WTC11 (cell line): ENCODE measurements at regions of chr6 and their contacts with region 1.

Region 1: GRCh38 chr6:34027445-34027936 is 118.4 kb downstream of the GRM4 start:
- DNase-seq: peak; percentile 85
- ATAC-seq: peak; percentile 85
- H3K4me3 Mint-ChIP-seq: no peak overlapping the region
- H3K27ac Mint-ChIP-seq: no peak overlapping the region
- H3K4me1 Mint-ChIP-seq: no peaks in the 10 kb centered on the region
- H3K27me3 Mint-ChIP-seq: no peaks in the 10 kb centered on the region
- CTCF ChIP-seq: peak; percentile 86

Region 2: GRCh38 chr6:33851959-33852358 is 175.5 kb before region 1 on chr6:
- CTCF ChIA-PET with region 1: interaction called, 32 read pairs
- POLR2A ChIA-PET with region 1: no interaction called
- DNase-seq: peak; percentile 78
- ATAC-seq: peak; percentile 88
- H3K4me3 Mint-ChIP-seq: no peak overlapping the region
- H3K27ac Mint-ChIP-seq: no peak overlapping the region
- H3K4me1 Mint-ChIP-seq: peaks cover 24% of the 10 kb centered on the region
- H3K27me3 Mint-ChIP-seq: peaks cover 3% of the 10 kb centered on the region; the same call in 1 of the 2 replicates
- CTCF ChIP-seq: 0 out of 2 replicates have a peak, but pooled peaks have one; percentile 20

Region 3: DNA sequence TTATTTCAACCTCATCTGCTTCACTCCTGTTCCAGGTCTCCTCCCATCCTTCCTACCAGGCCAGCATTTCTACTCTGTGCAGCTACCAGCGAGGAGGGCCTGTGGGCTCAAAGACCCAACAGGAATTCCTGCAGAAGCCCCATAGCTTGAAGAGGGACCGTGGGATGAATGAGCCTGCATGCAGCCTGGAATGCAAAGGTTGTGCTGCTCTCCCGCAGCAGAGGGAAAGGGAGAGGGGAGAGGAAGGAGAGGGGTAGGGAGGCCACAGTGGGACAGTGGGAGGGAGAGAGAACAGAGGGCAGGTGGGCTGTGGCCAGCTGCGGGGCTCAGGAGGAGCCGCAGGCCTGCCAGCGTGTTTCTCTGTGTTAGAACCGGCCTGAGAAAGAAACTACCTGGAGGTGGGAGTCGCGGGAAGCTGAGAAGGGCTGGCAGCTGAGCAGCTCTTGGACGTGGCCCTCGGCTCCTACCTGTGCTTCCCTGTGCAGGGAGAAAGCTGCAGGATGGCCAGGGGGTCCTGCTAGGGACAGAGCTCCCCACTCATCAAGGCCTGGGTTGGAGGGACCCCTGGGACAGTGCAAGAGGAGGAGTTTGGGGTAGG is 157.6 kb before region 1 on chr6:
- CTCF ChIA-PET with region 1: no interaction called
- POLR2A ChIA-PET with region 1: no interaction called
- DNase-seq: peak; percentile 36
- ATAC-seq: peak; percentile 78
- H3K4me3 Mint-ChIP-seq: no peak overlapping the region
- H3K27ac Mint-ChIP-seq: no peak overlapping the region
- H3K4me1 Mint-ChIP-seq: peaks cover 22% of the 10 kb centered on the region
- H3K27me3 Mint-ChIP-seq: no peaks in the 10 kb centered on the region
- CTCF ChIP-seq: no peak

Region 4: GRCh38 chr6:33967966-33968724 is 59.3 kb before region 1 on chr6:
- CTCF ChIA-PET with region 1: interaction called, 68 read pairs
- POLR2A ChIA-PET with region 1: no interaction called
- DNase-seq: peak; percentile 62
- ATAC-seq: peak; percentile 99
- H3K4me3 Mint-ChIP-seq: no peak overlapping the region
- H3K27ac Mint-ChIP-seq: no peak overlapping the region
- H3K4me1 Mint-ChIP-seq: no peaks in the 10 kb centered on the region
- H3K27me3 Mint-ChIP-seq: peaks cover 38% of the 10 kb centered on the region
- CTCF ChIP-seq: no peak

Region 5: DNA sequence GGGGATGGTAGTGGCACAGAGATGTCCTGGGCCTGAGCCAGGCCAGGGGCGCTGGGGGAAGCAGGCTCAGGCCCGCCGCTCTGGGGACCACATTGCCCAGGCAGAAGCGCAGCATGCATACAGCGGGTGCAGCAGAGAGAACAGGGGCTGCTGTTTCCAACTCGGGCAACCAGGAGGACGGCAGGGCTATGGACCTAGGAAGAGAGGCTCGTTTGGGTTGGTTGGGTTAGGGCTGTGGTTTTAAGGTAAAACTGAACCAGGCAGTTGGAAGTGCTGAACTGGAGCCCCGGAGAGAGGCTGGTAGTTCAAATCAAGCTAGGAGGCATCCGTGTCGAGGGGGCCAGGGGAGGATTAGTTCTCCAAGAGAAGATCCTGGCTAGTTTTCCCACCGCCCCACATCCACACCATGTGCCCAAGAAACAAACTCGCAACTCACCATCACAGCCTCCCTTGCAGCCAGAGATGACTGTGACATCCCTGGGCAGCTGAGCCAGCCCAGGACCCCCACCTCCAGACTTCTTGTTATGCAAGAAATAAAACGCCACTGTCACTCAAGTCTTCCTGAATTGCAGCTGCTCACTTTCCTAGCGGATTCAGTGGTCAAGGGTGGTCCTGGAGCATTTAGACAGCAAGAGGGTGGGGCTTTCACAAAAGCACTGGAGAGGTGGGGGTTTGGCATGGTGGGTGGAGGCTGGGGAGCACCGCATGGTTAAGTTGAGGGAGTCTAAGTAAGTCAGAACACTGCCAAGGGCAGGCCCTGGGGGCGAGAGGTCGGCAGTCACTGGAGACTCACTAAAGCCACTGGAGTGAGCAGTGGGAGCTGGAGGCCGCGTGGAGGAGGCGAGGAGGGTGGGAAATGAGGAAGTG is 42.8 kb before region 1 on chr6:
- CTCF ChIA-PET with region 1: interaction called, 13 read pairs
- POLR2A ChIA-PET with region 1: no interaction called
- DNase-seq: no peak
- ATAC-seq: no peak
- H3K4me3 Mint-ChIP-seq: no peak overlapping the region
- H3K27ac Mint-ChIP-seq: no peak overlapping the region
- H3K4me1 Mint-ChIP-seq: peaks cover 20% of the 10 kb centered on the region
- H3K27me3 Mint-ChIP-seq: peaks cover 21% of the 10 kb centered on the region; the same call in 1 of the 2 replicates
- CTCF ChIP-seq: no peak

Region 6: DNA sequence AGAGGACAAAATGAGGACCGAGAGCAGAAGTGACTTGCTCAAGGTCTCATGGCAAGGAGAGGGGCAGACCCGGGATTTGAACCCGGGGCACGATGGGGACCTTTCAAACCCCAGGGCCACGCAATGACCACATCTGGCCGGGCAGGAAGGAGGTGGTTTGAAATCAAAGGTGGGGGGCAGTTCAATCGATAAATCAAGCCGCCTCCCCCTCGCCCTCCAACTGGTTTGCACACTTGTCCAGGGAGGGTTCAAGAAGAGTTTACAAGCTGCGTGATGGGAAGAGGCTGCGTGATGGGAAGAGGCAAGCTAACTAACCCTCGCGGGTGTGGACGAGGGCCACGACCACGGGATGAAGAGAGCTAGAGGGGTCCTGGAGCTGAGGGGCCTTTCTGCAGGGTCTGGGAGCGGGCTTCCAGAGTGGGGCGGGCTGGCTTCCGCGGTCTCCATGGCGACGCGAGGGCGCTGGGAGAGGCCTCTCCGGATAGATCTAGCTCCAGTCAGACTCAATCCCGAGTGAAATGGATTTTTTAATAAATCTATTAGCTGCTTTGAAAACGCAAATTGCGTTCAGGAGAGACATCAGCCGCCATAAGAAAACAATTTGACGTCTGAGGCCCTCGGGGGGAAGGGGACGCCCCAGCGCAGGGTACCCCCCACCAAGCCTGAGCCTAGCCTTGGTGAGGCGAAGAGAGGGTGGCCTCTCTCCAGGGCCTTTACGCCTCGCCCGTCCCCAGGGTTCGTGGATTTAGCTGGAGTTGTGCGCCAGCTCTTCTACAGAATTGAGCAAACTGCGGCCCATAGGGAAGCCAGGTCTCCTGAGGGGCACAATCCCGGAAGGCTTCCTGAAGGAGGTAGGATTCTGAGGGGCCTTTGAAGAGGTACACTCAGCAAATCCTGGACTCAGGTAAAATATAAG is 25.5 kb before region 1 on chr6:
- CTCF ChIA-PET with region 1: interaction called, 12 read pairs
- POLR2A ChIA-PET with region 1: no interaction called
- DNase-seq: no peak
- ATAC-seq: peak; percentile 10; the same call in 1 of the 2 replicates
- H3K4me3 Mint-ChIP-seq: no peak overlapping the region
- H3K27ac Mint-ChIP-seq: no peak overlapping the region
- H3K4me1 Mint-ChIP-seq: peaks cover 20% of the 10 kb centered on the region
- H3K27me3 Mint-ChIP-seq: peaks cover 17% of the 10 kb centered on the region
- CTCF ChIP-seq: no peak

Region 7: GRCh38 chr6:34067814-34068213 is 40.3 kb after region 1 on chr6:
- CTCF ChIA-PET with region 1: interaction called, 10 read pairs
- POLR2A ChIA-PET with region 1: no interaction called
- DNase-seq: no peak
- ATAC-seq: peak; percentile 38
- H3K4me3 Mint-ChIP-seq: no peak overlapping the region
- H3K27ac Mint-ChIP-seq: no peak overlapping the region
- H3K4me1 Mint-ChIP-seq: peaks cover 2% of the 10 kb centered on the region; the same call in 1 of the 2 replicates
- H3K27me3 Mint-ChIP-seq: no peaks in the 10 kb centered on the region
- CTCF ChIP-seq: no peak

Region 8: GRCh38 chr6:34103321-34103720 is 75.8 kb after region 1 on chr6:
- CTCF ChIA-PET with region 1: no interaction called
- POLR2A ChIA-PET with region 1: no interaction called
- DNase-seq: no peak
- ATAC-seq: no peak
- H3K4me3 Mint-ChIP-seq: no peak overlapping the region
- H3K27ac Mint-ChIP-seq: peak overlapping the region; percentile 23; the same call in 1 of the 2 replicates
- H3K4me1 Mint-ChIP-seq: peaks cover 20% of the 10 kb centered on the region
- H3K27me3 Mint-ChIP-seq: no peaks in the 10 kb centered on the region
- CTCF ChIP-seq: no peak

Region 9: DNA sequence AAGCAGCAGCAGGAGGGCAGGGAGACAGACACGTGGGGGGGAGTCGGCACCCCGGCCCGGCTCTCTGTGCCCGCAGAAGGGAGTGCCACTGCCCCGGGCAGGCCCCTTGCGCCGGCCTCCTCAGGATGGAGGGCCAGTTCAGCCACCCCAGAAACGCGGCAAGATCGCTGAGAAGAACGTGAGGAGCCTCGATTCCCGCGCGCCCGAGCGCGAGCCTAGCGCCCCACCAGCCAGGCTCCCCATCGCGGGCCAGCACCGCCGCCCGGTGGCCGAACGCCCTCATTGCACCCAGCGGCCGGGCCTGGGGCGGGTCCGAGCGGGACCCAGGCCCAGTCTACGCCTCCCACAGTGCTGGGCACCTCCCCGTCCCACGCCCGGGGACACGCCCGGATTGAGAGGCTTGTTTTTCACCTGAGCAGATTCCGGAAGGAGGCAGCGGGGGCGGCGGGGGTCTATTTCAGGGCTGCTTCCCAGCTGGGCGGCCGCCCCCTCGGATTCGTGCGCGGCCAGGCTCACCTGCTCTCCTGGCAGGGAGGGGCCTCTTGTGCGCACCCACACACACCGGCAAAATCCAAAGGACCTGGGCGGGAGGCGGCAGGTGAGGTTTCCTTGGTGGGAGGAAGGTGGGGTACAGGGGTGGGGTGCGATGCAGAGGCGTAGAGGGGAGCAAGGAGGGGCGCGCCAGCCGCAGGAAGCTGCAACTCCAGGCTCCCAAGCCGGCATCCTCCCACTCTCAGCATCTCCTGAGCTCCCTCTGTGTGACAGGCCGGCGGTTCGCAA is 127.4 kb after region 1 on chr6:
- CTCF ChIA-PET with region 1: interaction called, 70 read pairs
- POLR2A ChIA-PET with region 1: interaction called, 3 read pairs
- DNase-seq: peak; percentile 87
- ATAC-seq: peak; percentile 78
- H3K4me3 Mint-ChIP-seq: peak overlapping the region; percentile 64
- H3K27ac Mint-ChIP-seq: no peak overlapping the region
- H3K4me1 Mint-ChIP-seq: peaks cover 40% of the 10 kb centered on the region
- H3K27me3 Mint-ChIP-seq: peaks cover 64% of the 10 kb centered on the region
- CTCF ChIP-seq: peak; percentile 97

Region 10: DNA sequence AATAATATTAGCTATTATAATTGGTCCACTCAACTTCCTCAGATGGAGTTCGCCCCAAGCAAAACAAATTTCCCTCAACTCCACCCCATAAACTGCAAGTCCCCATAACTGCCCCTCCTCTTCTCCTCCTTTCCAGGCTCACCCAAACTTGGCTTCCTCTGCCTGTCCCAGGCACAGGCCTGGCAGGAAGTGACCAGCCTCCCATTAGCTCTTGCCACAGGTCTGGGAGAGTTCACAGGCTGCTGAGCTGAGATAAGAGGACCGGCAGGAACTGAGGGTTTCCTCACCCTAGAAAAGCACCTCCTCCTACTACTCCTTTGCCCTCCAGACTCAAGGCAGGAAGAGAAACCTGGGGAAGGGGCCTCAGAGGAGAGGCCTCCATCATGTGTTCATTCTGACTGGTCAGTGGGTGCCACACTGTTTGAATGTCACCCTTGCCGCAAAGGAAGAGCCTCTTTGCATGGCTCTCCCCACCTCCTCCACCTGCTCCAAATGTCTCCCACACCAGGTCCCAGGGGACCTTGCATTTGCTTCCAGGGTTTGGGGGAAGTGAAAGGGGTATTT is 245.8 kb after region 1 on chr6:
- CTCF ChIA-PET with region 1: no interaction called
- POLR2A ChIA-PET with region 1: no interaction called
- DNase-seq: no peak
- ATAC-seq: no peak
- H3K4me3 Mint-ChIP-seq: no peak overlapping the region
- H3K27ac Mint-ChIP-seq: no peak overlapping the region
- H3K4me1 Mint-ChIP-seq: peaks cover 5% of the 10 kb centered on the region
- H3K27me3 Mint-ChIP-seq: no peaks in the 10 kb centered on the region
- CTCF ChIP-seq: no peak